Heart right ventricle (tissue), 16 donors: ENCODE measurements at regions of chr14 and their contacts with region 1.

Region 1: GRCh38 chr14:57189070-57189469 is 79.6 kb downstream of the EXOC5 start:
- DNase-seq: no peak
- ATAC-seq: no peak
- H3K4me3 ChIP-seq: no peak overlapping the region
- H3K27ac ChIP-seq: no peak overlapping the region
- H3K4me1 ChIP-seq: no peaks in the 10 kb centered on the region
- H3K27me3 ChIP-seq: peaks cover 0 to 19% (median 0%) of the 10 kb centered on the region in 7 donors
- CTCF ChIP-seq: peak in 1 of 9 donors; percentile 26

Region 2: GRCh38 chr14:56491299-56492285 is 697.5 kb before region 1 on chr14:
- intact Hi-C with region 1: loop called in 1 of 10 experiments (anchors 5 kb)
- DNase-seq: peak in 1 of 2 donors; percentile 25
- ATAC-seq: peak in 6 of 8 donors; percentile 35 to 57 (median 44)
- H3K4me3 ChIP-seq: no peak overlapping the region
- H3K27ac ChIP-seq: no peak overlapping the region
- H3K4me1 ChIP-seq: peaks cover 0 to 12% (median 0%) of the 10 kb centered on the region in 9 donors
- H3K27me3 ChIP-seq: no peaks in the 10 kb centered on the region
- CTCF ChIP-seq: peak; percentile 42 to 77 (median 71)